ENCODE measurements at regions of chr14 and their contacts with region 1.

Region 1: GRCh38 chr14:94485944-94486841 is 10.2 kb upstream of the SERPINA9 start:
- DNase-seq: peak; percentile 85
- H3K4me3 ChIP-seq: peak overlapping the region; percentile 12 to 56; a peak in 2 of 4 replicates
- H3K27ac ChIP-seq: no peak overlapping the region
- H3K4me1 ChIP-seq: peaks cover 3 to 4% of the 10 kb centered on the region in 2 experiments; a peak in 2 of 4 replicates
- H3K27me3 ChIP-seq: no peaks in the 10 kb centered on the region; the same call in 1 of the 2 replicates
- CTCF ChIP-seq: peak; percentile 99
- EP300 ChIP-seq: no peak
- RAD21 ChIP-seq: peak; percentile 78

Region 2: DNA sequence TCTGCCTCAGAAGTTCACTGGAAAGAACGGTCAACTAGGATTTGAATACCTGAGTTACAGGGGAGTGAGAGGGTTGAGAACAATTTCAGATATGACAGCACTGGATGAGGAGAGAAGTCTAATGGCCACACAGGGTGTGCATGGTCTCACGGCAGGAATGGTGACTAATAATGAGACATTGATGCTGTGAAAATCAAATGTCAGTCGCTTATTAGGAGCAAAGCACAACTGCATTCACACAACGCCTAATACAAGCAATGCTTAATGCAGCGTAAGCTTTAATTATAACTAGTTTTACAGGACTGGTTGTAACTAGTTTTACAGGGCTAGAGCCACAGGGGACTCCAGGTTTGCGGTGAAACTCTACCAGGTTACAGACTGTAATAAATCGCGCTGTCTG is 674.5 kb before region 1 on chr14:
- CTCF ChIA-PET with region 1: no interaction called
- POLR2A ChIA-PET with region 1: no interaction called
- DNase-seq: no peak
- H3K4me3 ChIP-seq: no peak overlapping the region
- H3K27ac ChIP-seq: no peak overlapping the region
- H3K4me1 ChIP-seq: no peaks in the 10 kb centered on the region
- H3K27me3 ChIP-seq: no peaks in the 10 kb centered on the region
- CTCF ChIP-seq: no peak
- EP300 ChIP-seq: no peak
- RAD21 ChIP-seq: no peak

Region 3: GRCh38 chr14:93832665-93833064 is 653.5 kb before region 1 on chr14:
- CTCF ChIA-PET with region 1: no interaction called
- POLR2A ChIA-PET with region 1: no interaction called
- DNase-seq: peak; percentile 81
- H3K4me3 ChIP-seq: no peak overlapping the region
- H3K27ac ChIP-seq: peak overlapping the region in 1 of 2 experiments; percentile 76; a peak in 2 of 4 replicates
- H3K4me1 ChIP-seq: peaks cover 0 to 35% of the 10 kb centered on the region in 2 experiments; a peak in 2 of 4 replicates
- H3K27me3 ChIP-seq: no peaks in the 10 kb centered on the region
- CTCF ChIP-seq: no peak
- EP300 ChIP-seq: peak in 1 of 2 experiments; percentile 68; a peak in 1 of 4 replicates
- RAD21 ChIP-seq: 0 out of 2 replicates have a peak, but pooled peaks have one; percentile 10

Region 4: DNA sequence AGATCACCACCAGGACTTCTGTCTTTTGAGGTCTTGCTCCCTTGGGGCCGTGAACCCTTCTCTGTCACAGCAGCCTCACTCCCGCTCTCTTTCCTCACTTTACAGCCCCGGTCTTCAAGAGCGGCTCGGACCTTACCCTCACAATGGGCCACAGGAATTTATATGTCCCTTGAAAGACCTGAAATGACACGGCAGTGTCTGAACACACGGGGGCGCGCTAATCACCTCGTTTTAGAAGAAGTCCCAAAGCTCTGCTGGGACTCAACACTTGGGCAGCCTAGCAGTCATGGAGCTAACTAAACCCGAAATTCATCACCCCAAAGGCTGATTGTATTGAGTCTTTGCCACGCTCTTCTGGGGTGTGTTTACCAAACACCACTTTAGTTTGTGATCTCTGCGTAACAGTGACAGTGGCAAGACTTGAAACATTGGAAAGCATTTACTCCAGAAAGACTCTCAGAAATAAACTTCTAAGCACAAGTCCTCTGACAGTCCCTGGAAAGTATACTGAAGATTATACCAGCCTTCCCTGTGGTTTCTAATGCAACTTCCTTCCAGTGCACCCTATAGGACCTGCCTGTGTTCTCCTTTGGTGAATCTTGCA is 62.6 kb before region 1 on chr14:
- CTCF ChIA-PET with region 1: interaction called, 37 read pairs
- POLR2A ChIA-PET with region 1: no interaction called
- DNase-seq: peak; percentile 41
- H3K4me3 ChIP-seq: peak overlapping the region; percentile 14 to 61; a peak in 3 of 4 replicates
- H3K27ac ChIP-seq: no peak overlapping the region
- H3K4me1 ChIP-seq: no peaks in the 10 kb centered on the region
- H3K27me3 ChIP-seq: peaks cover 6% of the 10 kb centered on the region; the same call in 1 of the 2 replicates
- CTCF ChIP-seq: peak; percentile 79
- EP300 ChIP-seq: no peak
- RAD21 ChIP-seq: peak; percentile 50

Region 5: DNA sequence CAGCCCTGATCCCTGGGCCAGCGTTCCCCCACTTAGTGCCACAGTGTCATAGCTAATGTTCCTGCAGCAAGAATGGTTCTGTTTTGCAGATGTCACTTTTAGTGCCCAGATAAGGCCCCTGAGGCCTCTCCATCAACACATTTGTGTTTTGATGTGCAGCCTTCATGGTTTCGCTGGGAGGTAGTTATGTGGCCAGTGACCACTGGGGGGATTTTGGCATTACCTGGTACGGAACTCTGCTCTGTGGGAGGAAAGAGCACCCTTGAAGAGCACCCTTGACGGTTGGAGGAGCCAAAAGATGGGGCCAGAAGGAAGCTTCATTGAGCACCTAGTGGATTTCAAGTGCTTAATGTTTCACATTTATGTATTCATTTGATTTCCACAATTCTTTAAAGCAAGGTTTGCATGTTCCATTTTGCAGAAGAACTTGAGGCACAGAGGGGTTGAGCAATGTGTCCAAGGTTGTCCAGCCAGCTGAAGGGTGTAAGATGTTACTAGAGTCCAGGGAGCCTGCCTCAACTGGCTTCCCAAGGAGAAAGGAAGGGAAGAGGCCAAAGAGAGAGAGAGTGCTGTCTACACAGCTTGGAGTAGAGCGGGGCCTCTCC is 46.6 kb before region 1 on chr14:
- CTCF ChIA-PET with region 1: interaction called, 33 read pairs
- POLR2A ChIA-PET with region 1: no interaction called
- DNase-seq: no peak
- H3K4me3 ChIP-seq: no peak overlapping the region
- H3K27ac ChIP-seq: no peak overlapping the region
- H3K4me1 ChIP-seq: no peaks in the 10 kb centered on the region
- H3K27me3 ChIP-seq: peaks cover 31% of the 10 kb centered on the region; the same call in 1 of the 2 replicates
- CTCF ChIP-seq: no peak
- EP300 ChIP-seq: no peak
- RAD21 ChIP-seq: no peak

Region 6: GRCh38 chr14:94501588-94502516 is 15.7 kb after region 1 on chr14:
- CTCF ChIA-PET with region 1: interaction called, 21 read pairs
- POLR2A ChIA-PET with region 1: no interaction called
- DNase-seq: no peak
- H3K4me3 ChIP-seq: no peak overlapping the region
- H3K27ac ChIP-seq: no peak overlapping the region
- H3K4me1 ChIP-seq: no peaks in the 10 kb centered on the region
- H3K27me3 ChIP-seq: peaks cover 42% of the 10 kb centered on the region; the same call in 1 of the 2 replicates
- CTCF ChIP-seq: no peak
- EP300 ChIP-seq: no peak
- RAD21 ChIP-seq: no peak

Region 7: GRCh38 chr14:94531187-94531586 is 45.0 kb after region 1 on chr14:
- CTCF ChIA-PET with region 1: interaction called, 11 read pairs
- POLR2A ChIA-PET with region 1: no interaction called
- DNase-seq: no peak
- H3K4me3 ChIP-seq: no peak overlapping the region
- H3K27ac ChIP-seq: no peak overlapping the region
- H3K4me1 ChIP-seq: no peaks in the 10 kb centered on the region
- H3K27me3 ChIP-seq: peaks cover 7% of the 10 kb centered on the region; the same call in 1 of the 2 replicates
- CTCF ChIP-seq: no peak
- EP300 ChIP-seq: no peak
- RAD21 ChIP-seq: no peak

Region 8: DNA sequence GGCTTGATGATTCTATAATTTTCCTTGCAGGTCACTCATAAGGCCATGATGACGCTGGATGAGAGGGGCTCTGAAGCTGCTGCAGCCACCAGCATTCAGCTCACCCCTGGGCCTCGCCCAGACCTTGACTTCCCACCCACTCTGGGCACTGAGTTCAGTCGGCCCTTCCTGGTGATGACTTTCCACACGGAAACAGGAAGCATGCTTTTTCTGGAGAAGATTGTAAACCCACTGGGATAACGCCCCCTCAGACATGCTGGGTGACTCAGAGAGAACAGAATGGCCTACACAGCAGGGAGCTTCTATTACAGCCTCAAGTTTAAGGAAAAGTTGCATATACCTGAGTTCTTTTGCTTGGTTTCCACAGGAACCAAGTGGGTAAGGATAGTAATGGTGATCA is 160.3 kb after region 1 on chr14:
- CTCF ChIA-PET with region 1: no interaction called
- POLR2A ChIA-PET with region 1: no interaction called
- DNase-seq: no peak
- H3K4me3 ChIP-seq: no peak overlapping the region
- H3K27ac ChIP-seq: no peak overlapping the region
- H3K4me1 ChIP-seq: no peaks in the 10 kb centered on the region; a peak in 1 of 4 replicates
- H3K27me3 ChIP-seq: no peaks in the 10 kb centered on the region; the same call in 1 of the 2 replicates
- CTCF ChIP-seq: no peak
- EP300 ChIP-seq: no peak
- RAD21 ChIP-seq: no peak

Region 9: GRCh38 chr14:94738751-94739150 is 252.6 kb after region 1 on chr14:
- CTCF ChIA-PET with region 1: no interaction called
- POLR2A ChIA-PET with region 1: no interaction called
- DNase-seq: no peak
- H3K4me3 ChIP-seq: no peak overlapping the region
- H3K27ac ChIP-seq: no peak overlapping the region
- H3K4me1 ChIP-seq: no peaks in the 10 kb centered on the region
- H3K27me3 ChIP-seq: no peaks in the 10 kb centered on the region; the same call in 1 of the 2 replicates
- CTCF ChIP-seq: no peak
- EP300 ChIP-seq: no peak
- RAD21 ChIP-seq: no peak